Caco-2 (cell line): ENCODE measurements at regions of chr20 and their contacts with region 1.

Region 1: GRCh38 chr20:16821211-16822089 is 73.3 kb downstream of the OTOR start:
- DNase-seq: peak; percentile 41 to 49
- H3K4me3 ChIP-seq: no peak overlapping the region
- H3K4me3 Mint-ChIP-seq: no peak overlapping the region
- H3K27ac Mint-ChIP-seq: no peak overlapping the region
- H3K4me1 ChIP-seq: no peaks in the 10 kb centered on the region
- H3K4me1 Mint-ChIP-seq: no peaks in the 10 kb centered on the region
- H3K27me3 ChIP-seq: peaks cover 2% of the 10 kb centered on the region; the same call in 1 of the 2 replicates
- H3K27me3 Mint-ChIP-seq: peaks cover 15% of the 10 kb centered on the region
- CTCF ChIP-seq: peak; percentile 81 to 88

Region 2: DNA sequence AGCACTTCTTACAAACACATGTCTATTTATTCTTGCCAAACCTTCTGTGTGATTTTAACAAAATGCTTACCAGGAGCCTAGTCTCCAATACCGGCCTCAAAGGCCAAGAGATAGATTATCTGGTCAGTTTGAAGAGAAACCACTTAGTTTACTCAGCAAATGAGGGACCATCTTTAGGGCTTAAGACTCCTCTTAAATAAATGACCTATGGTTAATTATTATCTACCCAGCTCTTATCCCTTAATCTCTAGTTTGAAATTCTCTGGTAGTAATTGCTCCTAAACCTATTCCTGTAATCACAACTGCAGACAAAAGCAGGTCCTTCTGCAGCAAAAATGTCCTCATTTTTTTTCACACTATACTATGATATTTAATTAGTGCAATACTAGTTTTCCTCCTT is 550.0 kb before region 1 on chr20:
- CTCF ChIA-PET with region 1: interaction called, 10 read pairs
- POLR2A ChIA-PET with region 1: no interaction called
- intact Hi-C with region 1: no loop called
- DNase-seq: peak in 1 of 2 experiments; percentile 53
- H3K4me3 ChIP-seq: no peak overlapping the region
- H3K4me3 Mint-ChIP-seq: no peak overlapping the region
- H3K27ac Mint-ChIP-seq: no peak overlapping the region
- H3K4me1 ChIP-seq: peaks cover 18% of the 10 kb centered on the region
- H3K4me1 Mint-ChIP-seq: peaks cover 18% of the 10 kb centered on the region
- H3K27me3 ChIP-seq: no peaks in the 10 kb centered on the region
- H3K27me3 Mint-ChIP-seq: no peaks in the 10 kb centered on the region
- CTCF ChIP-seq: no peak

Region 3: DNA sequence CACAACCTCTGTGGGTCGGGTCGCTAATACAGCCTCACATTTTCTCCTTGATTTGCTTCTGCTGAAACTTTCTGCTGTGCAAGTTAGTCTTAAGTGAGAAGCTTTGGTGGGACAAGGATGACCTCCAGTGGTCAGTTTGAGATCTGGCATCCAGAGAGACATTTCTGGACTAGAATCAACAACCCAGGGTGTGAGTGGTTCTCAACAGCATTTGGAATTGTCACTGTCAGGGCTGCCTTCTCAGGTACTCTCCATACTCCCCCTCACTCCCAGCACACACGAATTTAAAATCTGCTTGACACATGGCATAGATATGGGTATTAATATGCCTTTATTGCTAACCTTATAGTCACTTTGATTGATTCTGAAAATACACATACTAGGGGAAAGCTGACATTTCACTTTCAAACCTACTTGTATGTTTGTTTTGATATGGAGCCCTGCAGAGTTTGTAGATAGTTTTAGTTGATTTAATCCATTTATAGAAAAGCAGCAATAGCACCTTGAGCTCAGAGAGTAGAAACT is 60.1 kb before region 1 on chr20:
- CTCF ChIA-PET with region 1: no interaction called
- POLR2A ChIA-PET with region 1: no interaction called
- intact Hi-C with region 1: no loop called
- DNase-seq: peak; percentile 71 to 72
- H3K4me3 ChIP-seq: no peak overlapping the region
- H3K4me3 Mint-ChIP-seq: peak overlapping the region; percentile 12
- H3K27ac Mint-ChIP-seq: no peak overlapping the region
- H3K4me1 ChIP-seq: peaks cover 10% of the 10 kb centered on the region
- H3K4me1 Mint-ChIP-seq: peaks cover 7% of the 10 kb centered on the region
- H3K27me3 ChIP-seq: no peaks in the 10 kb centered on the region
- H3K27me3 Mint-ChIP-seq: peaks cover 3% of the 10 kb centered on the region
- CTCF ChIP-seq: peak; percentile 81 to 84